K562 (cell line): ENCODE measurements at regions of chr1 and their contacts with region 1.

Region 1: GRCh38 chr1:67390041-67390887 is 39.9 kb downstream of the SERBP1 start:
- DNase-seq: no peak
- ATAC-seq: no peak
- H3K4me3 ChIP-seq: no peak overlapping the region
- H3K27ac ChIP-seq: no peak overlapping the region
- H3K4me1 ChIP-seq: no peaks in the 10 kb centered on the region; a peak in 1 of 5 replicates
- H3K27me3 ChIP-seq: no peaks in the 10 kb centered on the region
- CTCF ChIP-seq: no peak
- EP300 ChIP-seq: no peak
- POLR2A ChIP-seq: no peak
- RAD21 ChIP-seq: no peak

Region 2: DNA sequence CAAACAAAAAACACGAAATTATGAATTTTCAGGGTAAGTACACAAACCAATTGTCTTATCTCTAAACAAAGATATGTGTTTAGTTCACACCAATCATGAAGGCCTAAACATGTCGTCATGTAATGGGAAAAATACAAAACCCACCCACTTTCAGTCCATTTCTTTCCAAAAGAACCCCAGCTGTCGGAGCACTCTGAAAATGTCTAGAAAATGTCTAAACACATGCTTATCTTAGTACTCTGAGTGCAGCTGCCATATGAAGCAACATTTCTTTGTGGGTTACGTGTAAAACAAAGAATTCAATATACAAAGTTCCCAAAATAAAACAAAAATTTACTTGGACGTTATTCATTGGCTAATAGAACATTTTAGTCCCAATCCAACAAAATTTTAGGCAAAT is 17.2 kb after region 1 on chr1:
- CTCF ChIA-PET with region 1: no interaction called
- POLR2A ChIA-PET with region 1: interaction called, 20 read pairs
- in situ Hi-C with region 1: no loop called
- intact Hi-C with region 1: no loop called
- DNase-seq: no peak
- ATAC-seq: no peak
- H3K4me3 ChIP-seq: no peak overlapping the region
- H3K27ac ChIP-seq: no peak overlapping the region
- H3K4me1 ChIP-seq: no peaks in the 10 kb centered on the region
- H3K27me3 ChIP-seq: no peaks in the 10 kb centered on the region
- CTCF ChIP-seq: no peak
- EP300 ChIP-seq: no peak
- POLR2A ChIP-seq: no peak
- RAD21 ChIP-seq: no peak

Region 3: GRCh38 chr1:67503974-67504373 is 113.7 kb after region 1 on chr1:
- CTCF ChIA-PET with region 1: no interaction called
- POLR2A ChIA-PET with region 1: no interaction called
- in situ Hi-C with region 1: no loop called
- intact Hi-C with region 1: no loop called
- DNase-seq: no peak
- ATAC-seq: no peak
- H3K4me3 ChIP-seq: no peak overlapping the region
- H3K27ac ChIP-seq: no peak overlapping the region
- H3K4me1 ChIP-seq: peaks cover 5 to 11% of the 10 kb centered on the region in 2 experiments; a peak in 4 of 5 replicates
- H3K27me3 ChIP-seq: no peaks in the 10 kb centered on the region
- CTCF ChIP-seq: no peak
- EP300 ChIP-seq: no peak
- POLR2A ChIP-seq: no peak
- RAD21 ChIP-seq: no peak